AG04450 (cell line): ENCODE measurements at regions of chr14 and their contacts with region 1.

Region 1: GRCh38 chr14:88189417-88190191 is 133.5 kb downstream of the KCNK10 start:
- DNase-seq: peak; percentile 65
- H3K4me3 ChIP-seq: peak overlapping the region; percentile 31
- H3K27ac ChIP-seq: no peak overlapping the region
- H3K27me3 ChIP-seq: no peaks in the 10 kb centered on the region
- CTCF ChIP-seq: peak; percentile 81

Region 2: DNA sequence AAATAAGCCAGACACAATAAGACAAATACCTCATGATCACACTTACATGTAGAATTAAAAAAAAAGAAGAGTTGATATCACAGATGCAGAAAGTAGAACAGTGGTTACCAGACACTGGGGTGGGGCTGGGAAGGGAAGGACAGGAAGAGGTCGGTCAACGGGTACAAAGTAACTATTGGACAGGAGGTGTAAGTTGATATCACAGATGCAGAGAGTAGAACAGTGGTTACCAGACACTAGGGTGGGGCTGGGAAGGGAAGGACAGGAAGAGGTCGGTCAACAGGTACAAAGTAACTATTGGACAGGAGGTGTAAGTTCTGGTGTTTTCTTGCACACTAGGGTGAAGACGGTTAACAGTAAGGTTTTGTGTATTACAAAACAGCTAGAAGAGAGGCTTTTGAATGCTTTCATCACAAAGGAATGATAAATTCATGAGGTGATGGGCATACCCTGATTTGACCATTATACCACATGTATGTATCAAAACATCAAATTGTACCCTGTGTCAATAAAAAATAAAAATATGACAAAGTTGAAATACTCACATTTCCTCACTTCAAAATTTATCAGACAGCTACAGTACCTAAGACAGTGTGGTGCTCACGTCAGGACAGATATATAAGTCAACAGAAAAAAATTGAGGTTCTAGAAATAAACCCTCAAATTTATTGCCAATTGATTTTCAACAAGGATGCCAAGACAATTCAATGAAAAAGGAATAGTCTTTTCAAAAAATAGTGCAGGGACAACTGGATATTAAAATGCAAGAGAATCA is 229.4 kb before region 1 on chr14:
- CTCF ChIA-PET with region 1: no interaction called
- POLR2A ChIA-PET with region 1: no interaction called
- DNase-seq: no peak
- H3K4me3 ChIP-seq: no peak overlapping the region
- H3K27ac ChIP-seq: no peak overlapping the region
- H3K27me3 ChIP-seq: no peaks in the 10 kb centered on the region
- CTCF ChIP-seq: no peak

Region 3: GRCh38 chr14:88013750-88014349 is 175.8 kb before region 1 on chr14:
- CTCF ChIA-PET with region 1: interaction called, 11 read pairs
- POLR2A ChIA-PET with region 1: no interaction called
- DNase-seq: peak; percentile 8
- H3K4me3 ChIP-seq: no peak overlapping the region
- H3K27ac ChIP-seq: no peak overlapping the region
- H3K27me3 ChIP-seq: no peaks in the 10 kb centered on the region
- CTCF ChIP-seq: peak; percentile 91

Region 4: GRCh38 chr14:88204214-88204613 is 14.6 kb after region 1 on chr14:
- CTCF ChIA-PET with region 1: interaction called, 18 read pairs
- POLR2A ChIA-PET with region 1: no interaction called
- DNase-seq: no peak
- H3K4me3 ChIP-seq: no peak overlapping the region
- H3K27ac ChIP-seq: no peak overlapping the region
- H3K27me3 ChIP-seq: no peaks in the 10 kb centered on the region
- CTCF ChIP-seq: no peak

Region 5: DNA sequence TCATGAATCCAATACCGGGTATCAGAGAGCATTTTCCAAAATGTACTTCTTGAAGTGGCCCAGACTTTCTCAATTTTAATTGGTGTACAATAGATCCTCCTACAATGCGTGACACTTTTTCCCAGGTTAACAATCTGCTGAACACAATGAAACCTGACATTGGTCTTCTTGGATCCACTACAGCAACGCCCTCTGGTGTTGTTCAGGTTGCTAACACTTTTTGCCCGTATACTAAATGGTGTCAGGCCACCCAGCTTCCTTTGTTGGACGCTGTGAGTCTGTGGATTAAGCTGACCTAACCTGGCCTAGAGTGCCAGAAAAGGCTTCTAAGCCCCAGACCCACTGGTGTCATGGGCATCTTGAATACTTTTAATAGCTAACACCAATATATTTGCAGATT is 44.3 kb after region 1 on chr14:
- CTCF ChIA-PET with region 1: interaction called, 18 read pairs
- POLR2A ChIA-PET with region 1: no interaction called
- DNase-seq: no peak
- H3K4me3 ChIP-seq: no peak overlapping the region
- H3K27ac ChIP-seq: no peak overlapping the region
- H3K27me3 ChIP-seq: no peaks in the 10 kb centered on the region
- CTCF ChIP-seq: 0 out of 2 replicates have a peak, but pooled peaks have one; percentile 16

Region 6: GRCh38 chr14:88380405-88380804 is 190.8 kb after region 1 on chr14:
- CTCF ChIA-PET with region 1: interaction called, 49 read pairs
- POLR2A ChIA-PET with region 1: no interaction called
- DNase-seq: no peak
- H3K4me3 ChIP-seq: no peak overlapping the region
- H3K27ac ChIP-seq: no peak overlapping the region
- H3K27me3 ChIP-seq: peaks cover 4% of the 10 kb centered on the region
- CTCF ChIP-seq: peak; percentile 42

Region 7: GRCh38 chr14:88551980-88552431 is 362.4 kb after region 1 on chr14:
- CTCF ChIA-PET with region 1: interaction called, 11 read pairs
- POLR2A ChIA-PET with region 1: no interaction called
- DNase-seq: no peak
- H3K4me3 ChIP-seq: peak overlapping the region; percentile 76
- H3K27ac ChIP-seq: peak overlapping the region; percentile 52
- H3K27me3 ChIP-seq: no peaks in the 10 kb centered on the region
- CTCF ChIP-seq: no peak

Region 8: GRCh38 chr14:88559852-88560251 is 370.2 kb after region 1 on chr14:
- CTCF ChIA-PET with region 1: interaction called, 31 read pairs
- POLR2A ChIA-PET with region 1: no interaction called
- DNase-seq: peak; percentile 38
- H3K4me3 ChIP-seq: no peak overlapping the region
- H3K27ac ChIP-seq: no peak overlapping the region
- H3K27me3 ChIP-seq: no peaks in the 10 kb centered on the region
- CTCF ChIP-seq: peak; percentile 70